A673 (cell line): ENCODE measurements at regions of chr9 and their contacts with region 1.

Region 1: GRCh38 chr9:126507041-126507755 is 106.5 kb upstream of the LMX1B start:
- DNase-seq: no peak
- H3K4me3 ChIP-seq: no peak overlapping the region
- H3K27ac ChIP-seq: no peak overlapping the region
- H3K4me1 ChIP-seq: no peaks in the 10 kb centered on the region
- H3K27me3 ChIP-seq: peaks cover 1% of the 10 kb centered on the region
- CTCF ChIP-seq: no peak

Region 2: DNA sequence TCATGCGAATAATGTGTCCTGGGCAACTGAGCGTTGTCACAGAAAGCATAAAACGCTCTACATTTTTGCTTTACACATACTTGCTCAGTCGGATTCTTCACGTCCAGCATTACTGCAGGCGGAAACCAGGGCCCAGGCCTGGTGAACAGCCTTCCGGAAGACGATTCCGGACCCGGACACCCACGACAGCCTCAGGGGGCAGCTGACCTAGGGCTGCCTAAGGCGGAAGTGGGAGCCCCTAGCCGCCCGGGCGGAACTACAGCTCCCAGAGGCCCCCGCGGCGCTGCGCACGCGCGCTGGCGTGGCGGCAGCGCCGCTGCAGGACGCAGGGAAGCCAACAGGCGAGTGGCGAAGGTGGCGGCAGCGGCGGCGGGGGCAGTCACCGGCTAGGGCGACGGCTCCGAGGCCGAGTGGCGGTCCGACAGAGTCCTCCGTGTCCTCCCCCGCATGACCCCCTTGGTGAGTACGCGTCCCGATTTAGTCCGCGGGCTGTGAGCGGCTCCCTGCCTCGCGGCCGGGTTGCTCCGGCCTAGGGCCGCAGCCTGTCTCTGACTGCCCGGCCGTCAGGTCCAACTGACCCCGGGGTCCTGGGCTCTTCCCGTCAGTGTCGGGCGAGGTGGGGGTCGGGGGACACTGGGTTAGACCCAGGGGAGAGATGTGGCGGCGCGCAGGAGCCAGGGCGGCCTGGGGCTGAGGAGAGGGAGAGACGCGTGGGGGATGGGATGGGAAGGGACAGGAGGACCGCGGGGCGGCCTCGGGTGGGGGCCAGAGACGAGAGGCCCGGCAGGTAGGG is 1245.5 kb before region 1 on chr9 and contains the start of gene GAPVD1:
- CTCF ChIA-PET with region 1: no interaction called
- POLR2A ChIA-PET with region 1: interaction called, 11 read pairs
- intact Hi-C with region 1: no loop called
- DNase-seq: peak; percentile 94
- H3K4me3 ChIP-seq: peak within 1 kb of the TSS; percentile 97
- H3K27ac ChIP-seq: peak within 1 kb of the TSS; percentile 87
- H3K4me1 ChIP-seq: no peaks in the 10 kb centered on the region
- H3K27me3 ChIP-seq: no peaks in the 10 kb centered on the region
- CTCF ChIP-seq: peak; percentile 42
- total RNA-seq, gene GAPVD1: 55.3 and 58.2 TPM in 2 replicates

Region 3: GRCh38 chr9:126456441-126457174 is 50.6 kb before region 1 on chr9:
- CTCF ChIA-PET with region 1: no interaction called
- POLR2A ChIA-PET with region 1: no interaction called
- intact Hi-C with region 1: no loop called
- DNase-seq: no peak
- H3K4me3 ChIP-seq: no peak overlapping the region
- H3K27ac ChIP-seq: no peak overlapping the region
- H3K4me1 ChIP-seq: no peaks in the 10 kb centered on the region
- H3K27me3 ChIP-seq: no peaks in the 10 kb centered on the region
- CTCF ChIP-seq: no peak